HEK293 (cell line): ENCODE measurements at regions of chrX and their contacts with region 1.

Region 1: GRCh38 chrX:149512225-149512885 is 7.2 kb upstream of the IDS start:
- H3K4me3 ChIP-seq: no peak overlapping the region
- H3K27ac ChIP-seq: no peak overlapping the region
- H3K4me1 ChIP-seq: no peaks in the 10 kb centered on the region
- CTCF ChIP-seq: peak; percentile 41

Region 2: DNA sequence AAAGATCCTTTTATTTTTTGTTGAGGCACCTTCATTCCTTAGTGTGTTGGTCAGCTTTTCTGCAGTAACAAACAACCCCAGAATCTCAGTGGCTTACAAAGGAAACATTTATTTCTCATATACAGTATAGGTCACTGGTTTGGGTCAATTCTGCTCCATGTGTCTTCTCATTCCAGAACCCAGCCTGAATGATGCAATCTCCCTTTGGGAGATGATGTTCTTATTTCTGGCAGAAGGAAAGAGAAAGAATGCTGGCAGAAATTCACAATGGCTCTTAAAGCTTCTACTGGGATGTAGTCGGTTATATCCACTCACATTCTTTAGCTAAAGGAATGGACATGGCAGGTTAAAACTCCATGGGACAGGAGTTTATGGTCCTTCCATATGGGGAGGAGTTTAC is 49.5 kb before region 1 on chrX:
- CTCF ChIA-PET with region 1: no interaction called
- POLR2A ChIA-PET with region 1: no interaction called
- H3K4me3 ChIP-seq: no peak overlapping the region
- H3K27ac ChIP-seq: no peak overlapping the region
- H3K4me1 ChIP-seq: no peaks in the 10 kb centered on the region
- CTCF ChIP-seq: no peak

Region 3: DNA sequence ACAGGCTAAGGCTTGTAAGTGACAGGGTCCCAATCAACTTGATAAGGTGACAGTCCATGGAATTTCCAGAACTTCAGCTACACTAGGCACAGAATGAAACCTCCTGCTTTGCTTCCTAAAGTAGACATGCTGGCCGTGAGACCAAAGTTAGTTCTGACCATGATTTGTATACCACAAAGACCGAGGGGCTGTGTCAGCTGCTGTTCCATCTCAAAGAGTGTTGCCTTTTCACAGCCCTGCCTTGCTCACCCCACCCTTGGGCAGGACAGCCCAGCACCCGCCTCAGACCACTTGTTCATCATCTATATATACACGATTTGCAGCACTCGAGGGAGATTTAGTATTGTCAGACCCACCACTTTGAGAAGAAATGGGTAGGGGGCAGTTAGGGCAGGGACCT is 12.6 kb before region 1 on chrX:
- CTCF ChIA-PET with region 1: interaction called, 14 read pairs
- POLR2A ChIA-PET with region 1: interaction called, 4 read pairs
- H3K4me3 ChIP-seq: no peak overlapping the region
- H3K27ac ChIP-seq: no peak overlapping the region
- H3K4me1 ChIP-seq: no peaks in the 10 kb centered on the region
- CTCF ChIP-seq: no peak

Region 4: GRCh38 chrX:149527705-149528104 is 15.3 kb after region 1 on chrX:
- CTCF ChIA-PET with region 1: interaction called, 17 read pairs
- POLR2A ChIA-PET with region 1: no interaction called
- H3K4me3 ChIP-seq: no peak overlapping the region
- H3K27ac ChIP-seq: no peak overlapping the region
- H3K4me1 ChIP-seq: no peaks in the 10 kb centered on the region
- CTCF ChIP-seq: no peak

Region 5: GRCh38 chrX:149687996-149688395 is 175.6 kb after region 1 on chrX:
- CTCF ChIA-PET with region 1: no interaction called
- POLR2A ChIA-PET with region 1: no interaction called
- H3K4me3 ChIP-seq: no peak overlapping the region
- H3K27ac ChIP-seq: no peak overlapping the region
- H3K4me1 ChIP-seq: no peaks in the 10 kb centered on the region
- CTCF ChIP-seq: no peak